Activated T-helper 1 cell treated with anti-CD3 and anti-CD28 coated beads, Interleukin-12 subunit alpha, Interleukin-12 subunit beta, Interleukin-2, Interleukin-4 antibody, amounts not matched to agents 30 ng/mL and 10 ng/mL and 1 ng/mL, durations not matched to agents 14 hours and 24 hours and 36 hours (primary cell): ENCODE measurements at regions of chrX and their contacts with region 1.

Region 1: DNA sequence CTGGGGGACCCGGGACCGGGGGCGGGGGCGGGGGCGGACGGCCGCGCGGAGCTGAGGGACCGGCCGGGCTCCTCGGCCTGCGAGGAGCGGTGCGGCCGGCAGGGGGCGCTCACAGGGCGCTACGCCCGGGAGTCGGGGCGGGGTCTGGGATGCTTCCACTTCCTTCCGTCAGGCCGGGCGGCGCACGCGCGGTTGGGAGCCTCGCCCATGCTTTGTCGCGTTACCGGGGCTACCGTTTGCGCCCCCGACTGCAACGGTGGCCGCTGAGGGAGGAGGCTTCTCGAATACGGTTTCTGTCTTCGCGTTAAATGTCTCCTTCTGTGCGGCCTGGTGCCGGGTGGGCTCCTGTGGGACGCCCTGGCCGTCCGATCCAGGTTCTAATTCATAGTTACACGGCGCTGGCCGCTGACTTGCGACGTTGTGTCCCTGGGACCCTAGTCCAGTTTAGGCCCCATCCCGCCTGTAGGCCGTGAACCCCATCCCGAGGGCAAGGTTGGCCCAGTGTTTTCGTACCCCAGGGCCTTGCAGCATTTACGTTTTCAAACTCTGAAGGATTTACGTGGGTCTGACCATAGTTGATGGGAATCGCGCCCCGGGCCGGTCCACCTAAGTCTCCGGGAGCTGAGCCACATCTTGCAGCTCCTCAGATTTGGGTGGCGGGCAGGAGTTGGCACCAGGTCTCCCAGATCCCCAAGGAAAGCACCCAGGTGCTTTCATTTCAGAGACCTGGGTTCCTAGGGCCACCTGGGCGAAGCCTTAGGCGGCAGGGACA is 549 bp downstream of the MSL3 start:
- DNase-seq: peak; percentile 84
- H3K4me3 Mint-ChIP-seq: peak overlapping the region; percentile 98
- H3K27ac Mint-ChIP-seq: peak overlapping the region; percentile 98
- H3K4me1 Mint-ChIP-seq: peaks cover 18% of the 10 kb centered on the region
- H3K27me3 Mint-ChIP-seq: peaks cover 25% of the 10 kb centered on the region

Region 2: GRCh38 chrX:10098270-10098713 is 1660.3 kb before region 1 on chrX:
- intact Hi-C with region 1: loop called (anchors 10 kb)
- DNase-seq: peak; percentile 53
- H3K4me3 Mint-ChIP-seq: peak overlapping the region; percentile 79
- H3K27ac Mint-ChIP-seq: peak overlapping the region; percentile 87
- H3K4me1 Mint-ChIP-seq: peaks cover 34% of the 10 kb centered on the region
- H3K27me3 Mint-ChIP-seq: no peaks in the 10 kb centered on the region

Region 3: GRCh38 chrX:11770320-11770719 is 11.7 kb after region 1 on chrX:
- intact Hi-C with region 1: loop called (anchors 1 kb)
- DNase-seq: no peak
- H3K4me3 Mint-ChIP-seq: no peak overlapping the region
- H3K27ac Mint-ChIP-seq: peak overlapping the region; percentile 79
- H3K4me1 Mint-ChIP-seq: peaks cover 37% of the 10 kb centered on the region
- H3K27me3 Mint-ChIP-seq: no peaks in the 10 kb centered on the region

Region 4: DNA sequence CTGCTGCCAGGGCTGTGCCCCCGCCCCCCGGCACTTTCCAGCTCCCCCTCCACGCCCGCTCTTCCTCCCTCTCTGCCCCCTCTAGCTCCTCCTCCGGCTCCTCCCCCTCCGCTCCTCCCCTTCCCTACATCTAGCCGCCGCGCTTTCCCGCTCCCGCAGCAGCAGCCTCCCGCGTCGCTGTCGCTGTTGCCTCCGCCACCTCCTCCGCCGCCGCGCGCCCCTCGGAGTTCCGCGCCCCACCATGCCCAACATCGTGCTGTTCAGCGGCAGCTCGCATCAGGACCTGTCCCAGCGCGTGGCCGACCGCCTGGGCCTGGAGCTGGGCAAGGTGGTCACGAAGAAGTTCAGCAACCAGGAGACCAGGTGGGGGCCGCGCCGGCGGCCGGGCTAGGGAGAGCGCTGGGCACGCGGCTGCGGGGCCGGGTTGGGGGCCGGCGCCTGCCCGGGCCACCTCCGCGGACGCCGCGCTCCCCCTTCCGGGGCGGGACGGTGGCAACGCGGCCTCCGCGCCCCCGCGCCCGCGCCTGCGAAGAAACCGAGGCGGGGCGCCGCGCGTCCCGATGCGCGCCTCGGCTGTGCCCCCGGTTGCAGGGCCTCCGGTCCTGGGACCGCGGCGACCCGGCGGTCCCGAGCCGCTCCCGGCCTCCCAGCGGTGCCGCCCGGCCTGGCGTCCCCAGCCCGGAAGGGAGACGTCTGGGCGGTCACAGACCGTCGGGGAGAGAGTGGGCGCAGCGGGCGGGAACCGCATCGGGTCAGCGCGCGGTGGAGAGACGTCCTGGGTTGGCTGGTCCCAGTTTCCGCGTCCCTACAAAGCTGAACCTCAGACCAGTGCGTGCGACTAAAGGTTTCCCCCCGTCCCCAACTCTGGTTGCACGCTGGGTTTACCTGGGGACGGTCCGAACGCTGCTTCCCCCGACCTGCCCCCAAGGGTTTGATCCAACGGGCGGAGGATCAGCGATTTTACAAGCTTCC is 1033.0 kb after region 1 on chrX and contains the start of gene PRPS2:
- intact Hi-C with region 1: loop called (anchors 5 kb)
- DNase-seq: peak; percentile 62
- H3K4me3 Mint-ChIP-seq: peak within 1 kb of the TSS; percentile 88
- H3K27ac Mint-ChIP-seq: peak within 1 kb of the TSS; percentile 76
- H3K4me1 Mint-ChIP-seq: peaks cover 41% of the 10 kb centered on the region
- H3K27me3 Mint-ChIP-seq: peaks cover 8% of the 10 kb centered on the region
- total RNA-seq, gene PRPS2: 115 and 116 TPM in 2 replicates